Psoas muscle (tissue), 8 donors: ENCODE measurements at regions of chr10 and their contacts with region 1.

Region 1: DNA sequence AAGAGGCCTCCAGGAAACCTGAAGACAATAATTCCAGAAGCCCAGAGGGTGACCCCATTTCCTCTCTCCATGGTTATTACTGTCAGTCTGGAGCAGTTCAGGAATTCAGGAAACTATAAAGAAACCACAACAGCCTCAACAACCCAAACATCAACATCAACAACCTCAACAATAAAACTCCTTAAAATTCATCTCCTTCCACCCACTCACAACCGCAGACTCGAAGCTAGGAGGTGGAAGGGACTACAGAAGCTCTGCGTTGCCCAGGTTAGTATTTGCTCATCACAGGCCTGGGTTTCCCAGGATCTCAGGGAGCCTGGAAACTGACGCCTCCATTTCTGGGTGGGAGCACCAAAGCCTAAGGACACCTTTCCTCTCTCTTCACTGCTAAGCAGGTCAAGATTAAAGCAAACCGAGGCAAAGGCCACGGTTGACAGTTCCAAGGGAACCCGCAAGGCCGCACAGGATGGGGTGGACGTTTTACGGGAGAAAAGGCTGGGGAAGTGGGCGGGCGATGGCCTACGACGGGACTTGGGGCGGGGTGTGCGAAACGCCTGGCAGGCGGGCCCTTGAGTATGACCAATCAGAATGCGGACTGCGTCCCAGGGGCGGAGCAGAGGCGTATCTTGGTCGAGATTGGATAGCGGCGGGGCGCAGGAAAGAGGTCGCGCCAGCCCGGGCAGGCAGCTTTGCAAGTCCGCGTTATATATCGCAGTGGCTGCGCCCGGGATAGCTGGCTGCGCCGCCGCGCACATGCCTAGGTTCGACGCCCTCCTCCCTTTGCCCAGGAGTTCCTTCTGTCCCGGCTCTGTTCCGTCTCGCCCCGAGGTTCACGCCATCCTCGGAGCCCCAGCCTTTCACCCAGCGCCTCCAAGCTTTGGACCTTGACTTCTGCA is at the start of gene ELOVL3:
- DNase-seq: peak; percentile 95 to 97
- ATAC-seq: peak; percentile 91 to 95 (median 93)
- H3K4me3 ChIP-seq: peak within 1 kb of the TSS; percentile 59
- H3K27ac ChIP-seq: peak within 1 kb of the TSS; percentile 75
- H3K4me1 ChIP-seq: peaks cover 22% of the 10 kb centered on the region
- H3K27me3 ChIP-seq: no peaks in the 10 kb centered on the region
- CTCF ChIP-seq: no peak
- total RNA-seq, gene ELOVL3: 0.25 to 0.54 (median 0.26) TPM in 3 of 4 donors, not detected in the other

Region 2: DNA sequence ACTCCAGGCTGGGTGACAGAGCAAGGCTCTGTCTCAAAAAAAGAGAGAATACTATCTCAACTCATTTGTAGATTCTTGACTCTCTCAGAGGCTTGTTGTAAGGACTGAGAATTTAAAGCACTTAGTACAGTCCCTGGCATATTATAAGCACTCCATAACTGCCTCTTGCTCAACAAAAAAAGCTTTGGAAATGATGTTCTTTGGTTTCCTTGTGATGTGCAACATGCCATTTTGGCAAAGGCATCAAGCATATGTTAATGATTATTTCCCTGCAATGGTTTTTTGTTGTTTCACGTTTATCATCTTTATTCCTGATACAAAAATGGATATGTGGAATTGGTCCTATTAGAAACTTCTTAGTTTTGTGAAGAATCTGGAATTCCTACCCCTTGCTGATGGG is 58.0 kb before region 1 on chr10:
- intact Hi-C with region 1: loop called (anchors 2 to 10 kb)
- DNase-seq: no peak
- ATAC-seq: no peak
- H3K4me3 ChIP-seq: no peak overlapping the region
- H3K27ac ChIP-seq: no peak overlapping the region
- H3K4me1 ChIP-seq: peaks cover 7% of the 10 kb centered on the region
- H3K27me3 ChIP-seq: no peaks in the 10 kb centered on the region
- CTCF ChIP-seq: no peak

Region 3: GRCh38 chr10:102175415-102175814 is 50.5 kb before region 1 on chr10:
- intact Hi-C with region 1: loop called (anchors 2 to 10 kb)
- DNase-seq: no peak
- ATAC-seq: peak in 2 of 4 donors; percentile 38 to 75
- H3K4me3 ChIP-seq: no peak overlapping the region
- H3K27ac ChIP-seq: no peak overlapping the region
- H3K4me1 ChIP-seq: peaks cover 3% of the 10 kb centered on the region
- H3K27me3 ChIP-seq: no peaks in the 10 kb centered on the region
- CTCF ChIP-seq: no peak

Region 4: GRCh38 chr10:102352066-102352715 is 126.3 kb after region 1 on chr10:
- intact Hi-C with region 1: loop called (anchors 1 to 2 kb)
- DNase-seq: peak; percentile 34 to 64
- ATAC-seq: peak in 3 of 4 donors; percentile 50 to 72 (median 67)
- H3K4me3 ChIP-seq: no peak overlapping the region
- H3K27ac ChIP-seq: no peak overlapping the region
- H3K4me1 ChIP-seq: peaks cover 10% of the 10 kb centered on the region
- H3K27me3 ChIP-seq: no peaks in the 10 kb centered on the region
- CTCF ChIP-seq: peak; percentile 81